Astrocyte of the cerebellum (primary cell): ENCODE measurements at regions of chr2 and their contacts with region 1.

Region 1: GRCh38 chr2:170966648-170967436 is 37.8 kb downstream of the GORASP2 start:
- DNase-seq: no peak
- H3K4me3 ChIP-seq: no peak overlapping the region
- CTCF ChIP-seq: peak; percentile 19

Region 2: DNA sequence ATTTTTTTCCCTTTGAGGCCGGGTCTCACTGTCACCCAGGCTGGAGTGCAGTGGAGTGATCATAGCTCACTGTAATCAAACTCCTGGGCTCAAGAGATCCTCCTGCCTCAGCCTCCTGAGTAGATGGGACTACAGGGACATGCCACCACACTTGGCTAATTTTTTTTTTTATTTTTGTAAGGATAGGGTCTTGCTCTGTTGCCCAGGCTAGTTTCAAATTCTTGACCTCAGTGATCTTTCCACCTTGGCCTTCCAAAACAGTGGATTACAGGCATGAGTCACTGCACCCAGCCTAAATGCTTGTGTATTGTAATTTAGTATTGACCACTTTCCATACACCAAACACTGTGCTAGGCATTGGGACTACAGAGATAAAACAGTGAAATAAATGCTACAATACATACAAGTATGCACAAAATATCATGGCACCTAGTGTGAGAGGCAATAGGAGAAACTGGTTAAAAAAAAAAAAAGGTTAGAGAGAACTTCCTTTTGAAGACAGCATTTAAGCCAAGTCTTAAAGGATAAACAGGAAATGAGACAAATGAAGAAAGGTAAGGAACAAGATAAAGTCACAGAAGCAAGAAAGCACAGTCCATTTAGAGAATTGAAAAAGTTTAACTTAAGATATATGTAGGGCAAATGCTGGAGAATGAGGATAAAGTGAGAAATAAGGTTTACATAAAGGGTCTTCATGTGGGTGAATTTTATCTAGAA is 75.6 kb after region 1 on chr2:
- in situ Hi-C with region 1: no loop called
- DNase-seq: no peak
- H3K4me3 ChIP-seq: no peak overlapping the region
- CTCF ChIP-seq: no peak

Region 3: DNA sequence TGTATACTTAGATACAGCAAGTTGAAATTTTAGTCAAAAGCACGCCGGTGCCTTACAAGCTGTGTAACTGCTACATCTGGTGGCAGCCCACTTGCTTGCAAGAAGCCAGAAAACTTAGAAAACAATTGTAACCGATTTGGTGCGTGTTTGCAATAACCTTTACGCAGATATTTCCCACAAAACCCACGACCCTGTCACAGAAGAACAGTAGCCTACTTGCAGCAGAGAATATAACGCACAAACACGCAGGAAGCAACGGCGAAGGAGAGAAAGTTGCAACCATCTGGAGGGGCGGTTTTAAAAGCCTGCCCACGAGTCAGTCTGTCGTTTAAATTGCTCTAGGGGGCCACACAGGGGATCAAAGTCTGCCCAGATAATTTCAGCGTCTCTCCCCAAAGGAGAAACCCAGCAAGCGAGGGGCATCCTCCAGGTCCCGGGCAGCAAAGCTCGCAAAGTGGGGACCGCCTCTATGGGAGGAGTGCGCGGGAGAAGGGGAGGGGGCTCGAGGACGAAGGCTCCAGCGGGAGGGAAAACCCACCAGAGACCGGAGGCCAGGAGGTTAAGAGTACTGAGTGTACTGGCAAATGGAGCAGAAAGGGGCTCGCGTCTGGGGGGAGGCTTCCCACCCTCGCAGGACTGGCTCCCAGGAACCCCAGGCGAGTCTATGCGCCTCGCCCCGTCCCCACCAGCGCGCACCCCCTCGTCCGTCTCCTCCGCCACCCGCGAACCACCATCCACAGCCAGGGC is 192.7 kb after region 1 on chr2:
- in situ Hi-C with region 1: loop called (anchors 5 kb)
- DNase-seq: peak; percentile 54
- H3K4me3 ChIP-seq: peak overlapping the region; percentile 88
- CTCF ChIP-seq: peak; percentile 82